Posterior vena cava (tissue), 2 donors: ENCODE measurements at regions of chr2 and their contacts with region 1.

Region 1: DNA sequence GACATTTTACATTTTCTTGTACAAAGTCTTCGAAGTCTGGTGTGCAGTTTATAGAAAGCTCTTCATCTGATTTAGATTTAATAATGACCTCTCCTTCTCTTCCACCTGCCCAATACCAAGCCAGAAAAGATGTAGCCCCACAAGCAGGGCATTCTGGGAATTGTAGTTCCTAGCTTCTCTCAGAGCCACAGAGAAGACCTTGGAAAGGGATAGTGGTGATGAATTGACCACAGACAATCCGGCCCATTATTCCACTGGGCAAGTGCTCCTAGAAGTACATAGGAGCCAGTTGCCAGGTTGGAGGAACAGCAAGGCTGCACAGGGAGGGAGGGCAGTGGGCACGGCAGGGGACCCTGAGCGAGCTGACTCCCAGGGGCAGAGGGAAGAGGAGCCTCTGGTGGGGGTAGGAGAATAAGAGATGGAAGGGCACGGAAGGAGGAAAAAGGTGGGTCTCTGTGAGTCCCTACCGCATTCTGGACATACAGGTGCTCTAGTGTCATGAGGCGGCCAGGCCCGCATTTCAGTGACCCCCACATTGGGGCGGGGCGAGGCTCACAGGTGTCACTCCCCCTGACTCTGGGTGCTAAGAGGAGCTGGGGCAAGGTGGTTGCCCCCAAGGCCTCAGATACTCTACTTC is 152.5 kb upstream of the HAAO start:
- DNase-seq: no peak

Region 2: DNA sequence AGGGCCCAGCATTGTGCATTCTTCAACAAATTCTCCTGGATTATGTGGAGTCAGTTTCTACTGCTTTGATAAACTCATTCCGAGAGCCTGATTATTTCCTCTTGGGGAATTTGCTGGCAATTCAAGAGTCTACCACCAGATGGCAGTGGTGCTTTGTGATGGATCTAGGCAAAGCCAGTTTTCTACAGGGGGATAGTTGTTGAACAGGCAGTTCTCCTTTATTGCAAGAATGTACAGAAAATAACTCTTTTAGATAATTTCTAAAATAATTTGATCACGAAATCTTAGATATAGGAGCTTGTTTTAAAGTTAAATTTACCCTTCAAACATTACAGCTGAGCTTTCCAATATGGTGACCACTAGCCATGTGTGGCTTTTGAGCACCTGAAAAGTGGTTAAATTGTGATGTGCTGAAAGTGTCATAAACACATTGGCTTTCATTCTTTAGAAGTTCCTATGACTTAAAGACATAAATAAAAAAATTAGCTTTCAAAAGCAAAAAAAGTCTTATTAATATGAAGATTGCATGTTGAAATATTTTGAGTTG is 85.8 kb before region 1 on chr2:
- intact Hi-C with region 1: loop called in 1 of 2 experiments (anchors 10 kb)
- DNase-seq: no peak

Region 3: GRCh38 chr2:43075054-43075593 is 130.2 kb after region 1 on chr2:
- intact Hi-C with region 1: loop called in 1 of 2 experiments (anchors 1 kb)
- DNase-seq: peak; percentile 95

Region 4: DNA sequence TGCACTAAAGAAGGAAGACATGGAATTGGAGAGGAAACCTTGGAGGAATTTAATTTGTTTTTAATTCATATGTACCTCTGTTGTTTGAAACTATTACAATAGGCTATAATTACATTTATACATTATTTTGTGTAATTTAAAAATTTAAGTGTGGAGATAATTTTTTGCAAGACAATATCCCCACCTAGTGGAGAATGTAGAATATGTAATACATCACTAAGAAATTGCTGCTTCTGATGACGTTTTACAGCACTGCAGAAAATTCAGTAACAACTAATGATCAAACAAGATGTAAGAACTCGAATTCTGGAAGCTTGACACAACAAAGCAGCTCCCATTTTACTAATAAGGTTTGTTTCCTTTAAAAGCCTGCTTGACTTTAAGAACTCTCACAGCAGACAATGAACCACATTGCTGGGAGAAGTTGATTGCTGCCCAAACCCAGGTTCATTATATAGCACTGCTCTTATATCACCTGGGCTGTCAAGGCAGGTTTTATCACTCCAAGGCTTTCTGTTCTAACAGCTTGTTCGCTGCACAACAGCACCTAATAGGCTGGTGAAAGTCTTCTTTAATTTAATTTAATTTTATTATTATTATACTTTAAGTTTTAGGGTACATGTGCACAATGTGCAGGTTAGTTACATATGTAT is 597.5 kb after region 1 on chr2:
- intact Hi-C with region 1: loop called in 1 of 2 experiments (anchors 5 kb)
- DNase-seq: no peak